ENCODE measurements at regions of chr2 and their contacts with region 1.

Region 1: DNA sequence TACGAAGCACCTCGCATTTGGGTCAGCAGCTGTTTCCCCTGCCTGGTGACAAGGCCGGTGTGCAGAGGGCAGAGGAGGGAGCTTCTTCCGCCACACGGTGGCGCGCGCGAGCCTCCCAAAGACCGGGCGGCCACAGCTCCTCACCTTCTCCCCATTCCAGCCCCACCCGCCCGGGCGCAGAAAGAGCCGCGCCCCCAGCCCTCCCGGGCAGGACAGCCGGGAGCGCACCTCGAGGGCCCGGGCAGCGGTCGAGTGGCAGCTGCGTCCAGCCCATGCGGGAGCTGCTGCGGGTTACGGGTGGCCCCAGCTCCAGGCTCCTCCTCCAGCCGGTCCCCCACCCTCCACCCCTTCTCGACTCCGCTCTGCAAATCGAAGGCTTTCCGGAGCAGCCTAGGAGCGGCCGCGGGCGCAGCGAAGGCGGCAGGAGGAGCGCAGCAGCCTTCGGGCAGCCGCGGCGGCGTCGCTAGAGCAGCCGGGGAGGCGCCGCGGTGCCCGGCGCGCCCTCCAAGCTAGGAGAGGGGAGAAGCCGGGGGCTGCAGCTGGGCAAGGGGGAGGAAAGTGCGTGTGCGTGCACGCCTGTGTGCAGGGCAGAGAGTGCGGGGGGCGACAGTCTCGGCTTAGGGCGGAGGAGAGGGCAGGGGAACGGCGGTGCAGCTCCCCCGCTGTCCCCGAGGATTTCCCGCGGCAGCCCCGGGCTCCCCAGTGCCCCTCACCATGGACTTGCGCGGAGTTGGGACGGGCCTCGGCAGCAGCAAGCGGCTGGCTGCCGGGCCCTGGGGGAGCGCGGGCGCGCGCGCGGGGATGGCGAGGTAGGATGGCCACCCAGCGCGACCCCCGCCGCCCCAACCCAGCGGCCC is at the start of gene CCDC85A:
- DNase-seq: peak; percentile 92 to 93 (median 92)
- H3K4me3 ChIP-seq: peak within 1 kb of the TSS; percentile 48 to 71 (median 59)
- H3K27ac ChIP-seq: no peak within 1 kb of the TSS
- H3K4me1 ChIP-seq: peaks cover 0 to 5% (median 0%) of the 10 kb centered on the region in 3 donors
- H3K27me3 ChIP-seq: no peaks in the 10 kb centered on the region
- CTCF ChIP-seq: peak; percentile 81
- total RNA-seq, gene CCDC85A: 2.1 TPM

Region 2: GRCh38 chr2:55844986-55845385 is 338.9 kb before region 1 on chr2:
- intact Hi-C with region 1: no loop called
- DNase-seq: no peak
- H3K4me3 ChIP-seq: no peak overlapping the region
- H3K27ac ChIP-seq: no peak overlapping the region
- H3K4me1 ChIP-seq: peaks cover 0 to 4% (median 0%) of the 10 kb centered on the region in 3 donors
- H3K27me3 ChIP-seq: no peaks in the 10 kb centered on the region
- CTCF ChIP-seq: no peak

Region 3: GRCh38 chr2:56754066-56754615 is 570.3 kb after region 1 on chr2:
- intact Hi-C with region 1: loop called (anchors 5 kb)
- DNase-seq: no peak
- H3K4me3 ChIP-seq: no peak overlapping the region
- H3K27ac ChIP-seq: no peak overlapping the region
- H3K4me1 ChIP-seq: no peaks in the 10 kb centered on the region
- H3K27me3 ChIP-seq: no peaks in the 10 kb centered on the region
- CTCF ChIP-seq: no peak

Measured in kidney (tissue), 22 donors.